ENCODE measurements at regions of chr18 and their contacts with region 1.

Region 1: DNA sequence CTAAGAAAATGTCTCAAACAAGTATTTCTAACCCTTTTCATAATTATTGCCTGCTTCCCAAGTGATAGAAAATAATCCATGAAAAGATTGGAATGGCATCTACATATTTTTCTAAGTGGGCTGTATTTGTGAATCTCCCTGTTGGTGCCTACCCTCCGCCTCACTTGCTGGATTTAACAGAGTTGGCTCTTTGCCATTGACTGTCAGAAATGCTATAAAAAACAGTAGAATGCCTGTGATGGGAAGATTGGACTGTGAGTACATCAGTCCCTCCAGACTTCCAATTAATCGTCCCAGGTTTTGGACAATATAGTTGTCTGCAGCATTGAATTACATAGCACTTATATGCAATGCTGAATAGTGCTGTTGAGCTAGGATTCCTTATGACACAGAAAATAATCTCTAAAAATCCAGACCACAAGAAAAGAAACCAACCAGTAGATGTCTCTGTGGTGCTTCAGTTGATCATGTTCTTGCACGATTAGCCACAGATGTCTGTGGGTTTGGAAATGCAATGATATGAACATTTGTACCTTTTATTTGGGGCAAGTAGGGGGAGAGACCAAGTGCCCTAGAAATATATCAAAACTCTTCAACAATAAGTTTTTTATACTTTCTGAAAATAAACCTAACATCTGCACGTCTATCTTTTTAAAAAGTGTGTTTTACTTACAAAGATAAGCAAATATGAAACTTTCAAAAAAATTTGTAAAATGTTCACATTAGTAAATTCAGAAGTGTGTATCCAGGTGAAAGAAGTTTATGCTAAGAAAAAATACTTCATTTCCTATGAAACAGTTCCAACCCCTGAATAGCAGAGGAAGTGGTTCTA is 88.5 kb downstream of the DYNAP start:
- DNase-seq: peak; percentile 19
- ATAC-seq: no peak
- H3K4me3 ChIP-seq: no peak overlapping the region
- H3K4me3 Mint-ChIP-seq: no peak overlapping the region
- H3K27ac ChIP-seq: no peak overlapping the region
- H3K27ac Mint-ChIP-seq: no peak overlapping the region
- H3K4me1 ChIP-seq: no peaks in the 10 kb centered on the region
- H3K4me1 Mint-ChIP-seq: peaks cover 1% of the 10 kb centered on the region
- H3K27me3 ChIP-seq: no peaks in the 10 kb centered on the region
- H3K27me3 Mint-ChIP-seq: peaks cover 10% of the 10 kb centered on the region
- CTCF ChIP-seq: peak; percentile 10

Region 2: DNA sequence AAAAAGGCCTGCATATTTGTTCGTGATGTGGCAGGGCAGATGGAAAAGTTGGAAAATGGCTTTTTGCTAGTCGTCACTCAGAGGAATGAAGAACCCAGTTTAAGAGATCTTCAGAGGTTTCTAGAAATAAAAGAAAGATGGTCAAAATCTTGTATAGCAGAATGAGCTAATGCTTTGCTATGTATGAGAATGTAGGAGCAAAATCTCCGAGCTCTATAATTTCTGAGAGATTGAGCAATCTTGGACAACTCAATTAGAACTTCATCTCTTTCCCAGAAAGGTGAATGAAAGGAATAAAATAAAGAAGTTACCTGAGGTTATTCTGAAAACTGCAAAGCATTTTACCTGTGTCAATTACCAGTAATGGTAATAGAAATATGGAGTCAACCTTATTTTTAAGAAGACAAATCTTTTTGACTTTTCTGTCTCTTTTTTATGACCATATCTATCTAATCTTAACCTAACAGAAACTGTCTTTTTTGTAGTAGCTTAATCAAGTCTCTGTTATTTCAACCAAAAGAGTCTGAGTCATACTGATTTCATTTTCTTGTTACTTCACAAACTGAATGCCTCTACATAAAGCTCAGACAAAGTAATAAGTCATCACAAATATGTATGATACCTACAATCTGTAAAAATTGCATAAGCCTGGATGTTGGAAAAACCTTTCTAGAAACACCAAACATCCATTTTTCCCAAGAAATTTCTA is 247.2 kb after region 1 on chr18:
- CTCF ChIA-PET with region 1: no interaction called
- POLR2A ChIA-PET with region 1: interaction called, 13 read pairs
- intact Hi-C with region 1: no loop called
- DNase-seq: no peak
- ATAC-seq: no peak
- H3K4me3 ChIP-seq: no peak overlapping the region
- H3K4me3 Mint-ChIP-seq: no peak overlapping the region
- H3K27ac ChIP-seq: no peak overlapping the region
- H3K27ac Mint-ChIP-seq: no peak overlapping the region
- H3K4me1 ChIP-seq: no peaks in the 10 kb centered on the region
- H3K4me1 Mint-ChIP-seq: no peaks in the 10 kb centered on the region
- H3K27me3 ChIP-seq: no peaks in the 10 kb centered on the region
- H3K27me3 Mint-ChIP-seq: peaks cover 4% of the 10 kb centered on the region
- CTCF ChIP-seq: no peak